ENCODE measurements at regions of chr14 and their contacts with region 1.

Region 1: DNA sequence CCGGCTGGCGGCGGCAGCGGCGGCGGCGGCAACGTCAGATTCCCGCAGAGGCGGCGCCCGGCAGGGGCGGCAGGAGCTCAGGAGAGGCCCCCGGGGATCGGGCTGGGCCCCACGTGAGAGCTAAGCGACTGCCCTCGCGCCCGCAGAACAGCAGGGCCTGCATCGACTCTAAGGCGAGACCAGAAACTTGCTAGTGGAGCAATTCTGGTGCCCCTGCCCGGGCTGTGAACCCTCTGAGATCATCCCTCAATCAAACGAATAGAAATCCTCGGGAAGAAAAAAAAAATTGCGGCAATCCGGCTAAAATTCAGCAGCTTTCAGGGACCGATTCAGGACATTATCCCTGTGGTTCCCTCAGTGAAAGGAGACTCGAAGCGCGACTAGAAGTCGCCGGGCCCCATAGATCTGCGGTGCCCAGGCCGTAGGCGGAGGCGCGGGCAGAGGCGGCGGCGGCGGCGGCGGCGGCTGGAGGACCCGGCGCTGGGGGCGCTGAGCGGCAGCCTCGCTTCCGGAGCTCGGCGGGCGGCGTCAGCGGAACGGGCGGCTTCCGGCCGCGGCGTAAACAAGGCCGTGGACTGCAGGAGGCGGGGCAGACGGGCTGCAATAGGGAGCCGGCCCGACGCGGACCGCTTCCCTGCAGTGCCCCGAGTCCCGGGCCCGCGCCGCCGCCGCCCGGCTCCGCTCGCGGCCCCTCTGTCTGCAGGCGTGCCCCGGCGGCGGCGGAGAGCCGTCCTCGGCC is at the start of gene KLHDC2:
- DNase-seq: peak; percentile 93
- H3K4me3 ChIP-seq: peak within 1 kb of the TSS; percentile 75 to 100 (median 87)
- H3K27ac ChIP-seq: peak within 1 kb of the TSS; percentile 93 to 99 (median 98)
- H3K4me1 ChIP-seq: peaks cover 0 to 30% (median 28%) of the 10 kb centered on the region in 4 donors
- H3K27me3 ChIP-seq: no peaks in the 10 kb centered on the region
- CTCF ChIP-seq: peak in 1 of 4 experiments; percentile 18
- EP300 ChIP-seq: no peak
- POLR2A ChIP-seq: no peak
- total RNA-seq, gene KLHDC2: 80.9 to 111 (median 96.4) TPM

Region 2: GRCh38 chr14:49692811-49693734 is 74.7 kb before region 1 on chr14 and contains the start of gene KLHDC1:
- intact Hi-C with region 1: loop called (anchors 2 kb)
- DNase-seq: peak; percentile 95
- H3K4me3 ChIP-seq: peak within 1 kb of the TSS; percentile 56 to 81 (median 66)
- H3K27ac ChIP-seq: peak within 1 kb of the TSS; percentile 91 to 99 (median 96)
- H3K4me1 ChIP-seq: peaks cover 0 to 21% (median 16%) of the 10 kb centered on the region in 4 donors
- H3K27me3 ChIP-seq: no peaks in the 10 kb centered on the region
- CTCF ChIP-seq: no peak
- EP300 ChIP-seq: no peak
- POLR2A ChIP-seq: peak; percentile 94 to 96
- total RNA-seq, gene KLHDC1: 11.4 to 19.1 (median 13.6) TPM

Region 3: DNA sequence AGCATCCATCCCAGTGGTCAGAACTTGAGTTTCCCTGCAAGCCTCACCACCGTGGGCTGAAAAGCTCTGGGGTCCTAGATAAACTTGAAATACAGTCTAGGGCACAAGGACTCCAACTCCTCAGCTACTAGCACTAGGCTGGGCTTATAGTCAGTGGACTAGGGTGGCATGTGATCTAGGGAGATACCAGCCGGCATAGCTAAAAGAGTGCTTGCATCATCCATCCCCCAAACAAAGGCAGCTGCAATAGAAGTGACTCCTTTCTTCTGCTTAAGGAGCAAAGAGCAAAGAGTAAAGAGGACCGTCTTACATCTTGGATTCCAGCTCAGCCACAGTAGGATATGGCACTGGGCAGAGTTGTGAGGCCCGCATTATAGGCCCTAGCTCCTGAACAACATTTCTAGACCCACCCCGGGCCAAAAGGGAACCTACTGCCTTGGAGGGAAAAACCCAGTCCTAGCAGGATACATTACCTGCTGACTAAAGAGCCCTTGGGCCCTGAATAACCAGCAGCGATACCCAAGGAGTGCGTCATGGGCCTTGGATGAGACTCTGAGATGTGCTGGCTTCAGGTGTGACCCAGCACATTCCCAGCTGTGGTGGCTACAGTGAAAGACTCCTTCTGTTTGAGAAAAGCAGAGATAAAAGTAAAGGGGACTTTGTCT is 481.5 kb after region 1 on chr14:
- intact Hi-C with region 1: no loop called
- DNase-seq: no peak
- H3K4me3 ChIP-seq: no peak overlapping the region
- H3K27ac ChIP-seq: no peak overlapping the region
- H3K4me1 ChIP-seq: no peaks in the 10 kb centered on the region
- H3K27me3 ChIP-seq: no peaks in the 10 kb centered on the region
- CTCF ChIP-seq: no peak
- EP300 ChIP-seq: no peak
- POLR2A ChIP-seq: no peak